ENCODE measurements at regions of chr1 and their contacts with region 1.

Region 1: GRCh38 chr1:84506002-84506728 is at the starts of genes GNG5 and SPATA1:
- DNase-seq: peak; percentile 98
- H3K4me3 Mint-ChIP-seq: peak within 1 kb of the TSS; percentile 95
- H3K27ac Mint-ChIP-seq: peak within 1 kb of the TSS; percentile 97
- H3K4me1 Mint-ChIP-seq: peaks cover 43% of the 10 kb centered on the region
- H3K27me3 Mint-ChIP-seq: no peaks in the 10 kb centered on the region
- total RNA-seq, gene GNG5: 122 to 127 TPM
- total RNA-seq, gene SPATA1: 4.0 to 4.7 TPM

Region 2: GRCh38 chr1:84422909-84423308 is 83.3 kb before region 1 on chr1:
- CTCF ChIA-PET with region 1: no interaction called
- POLR2A ChIA-PET with region 1: no interaction called
- DNase-seq: no peak
- H3K4me3 Mint-ChIP-seq: no peak overlapping the region
- H3K27ac Mint-ChIP-seq: no peak overlapping the region
- H3K4me1 Mint-ChIP-seq: peaks cover 2% of the 10 kb centered on the region
- H3K27me3 Mint-ChIP-seq: no peaks in the 10 kb centered on the region

Region 3: DNA sequence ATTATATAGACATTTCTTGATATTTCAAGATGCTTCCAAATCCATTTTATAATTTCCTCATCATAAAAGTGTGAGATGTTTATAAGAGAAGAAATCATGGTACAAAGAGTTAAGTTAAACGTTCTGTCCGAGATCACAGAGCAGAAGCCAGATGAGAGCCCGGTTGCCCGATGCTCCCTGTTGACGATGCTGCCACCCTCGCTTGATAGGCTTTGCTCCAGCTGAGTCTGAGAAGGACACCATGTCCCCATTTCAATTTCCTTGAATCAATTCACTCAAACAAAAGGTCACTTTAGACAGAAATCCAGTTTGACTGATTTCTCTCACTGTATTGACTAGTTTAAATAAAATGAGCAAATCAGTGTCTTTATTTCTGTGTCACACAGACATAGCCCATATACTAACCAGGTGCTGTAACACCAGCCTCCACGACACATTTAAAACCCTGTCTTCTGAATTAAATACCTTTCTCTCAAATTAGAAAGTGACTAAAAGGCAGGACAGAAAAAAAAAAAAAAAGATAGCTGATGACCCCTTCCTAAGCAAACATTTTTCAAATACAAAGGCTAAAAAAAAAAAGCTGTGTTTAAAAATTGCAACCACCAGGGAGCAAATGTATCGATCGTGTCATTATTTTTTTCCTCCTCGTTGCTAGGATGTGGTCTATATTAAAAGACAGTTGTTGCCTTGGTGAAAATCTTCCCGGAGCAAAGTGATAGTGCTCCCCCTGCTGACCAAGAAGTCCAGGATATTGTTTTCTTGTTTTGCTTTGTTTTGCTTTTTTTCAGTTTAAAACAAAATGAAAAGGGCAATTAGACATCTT is 72.7 kb before region 1 on chr1:
- CTCF ChIA-PET with region 1: interaction called, 4 read pairs
- POLR2A ChIA-PET with region 1: interaction called, 18 read pairs
- DNase-seq: peak; percentile 60
- H3K4me3 Mint-ChIP-seq: peak overlapping the region; percentile 47
- H3K27ac Mint-ChIP-seq: peak overlapping the region; percentile 1
- H3K4me1 Mint-ChIP-seq: peaks cover 10% of the 10 kb centered on the region
- H3K27me3 Mint-ChIP-seq: no peaks in the 10 kb centered on the region

Region 4: GRCh38 chr1:84478876-84479868 is 27.0 kb before region 1 on chr1 and contains the start of gene RPF1:
- CTCF ChIA-PET with region 1: interaction called, 6 read pairs
- POLR2A ChIA-PET with region 1: interaction called, 96 read pairs
- DNase-seq: peak; percentile 81
- H3K4me3 Mint-ChIP-seq: peak within 1 kb of the TSS; percentile 96
- H3K27ac Mint-ChIP-seq: peak within 1 kb of the TSS; percentile 95
- H3K4me1 Mint-ChIP-seq: peaks cover 34% of the 10 kb centered on the region
- H3K27me3 Mint-ChIP-seq: peaks cover 22% of the 10 kb centered on the region
- total RNA-seq, gene RPF1: 37.8 to 39.7 TPM

Region 5: GRCh38 chr1:84524590-84524989 is 18.4 kb after region 1 on chr1:
- CTCF ChIA-PET with region 1: interaction called, 5 read pairs
- POLR2A ChIA-PET with region 1: interaction called, 11 read pairs
- DNase-seq: no peak
- H3K4me3 Mint-ChIP-seq: no peak overlapping the region
- H3K27ac Mint-ChIP-seq: no peak overlapping the region
- H3K4me1 Mint-ChIP-seq: no peaks in the 10 kb centered on the region
- H3K27me3 Mint-ChIP-seq: no peaks in the 10 kb centered on the region

Region 6: DNA sequence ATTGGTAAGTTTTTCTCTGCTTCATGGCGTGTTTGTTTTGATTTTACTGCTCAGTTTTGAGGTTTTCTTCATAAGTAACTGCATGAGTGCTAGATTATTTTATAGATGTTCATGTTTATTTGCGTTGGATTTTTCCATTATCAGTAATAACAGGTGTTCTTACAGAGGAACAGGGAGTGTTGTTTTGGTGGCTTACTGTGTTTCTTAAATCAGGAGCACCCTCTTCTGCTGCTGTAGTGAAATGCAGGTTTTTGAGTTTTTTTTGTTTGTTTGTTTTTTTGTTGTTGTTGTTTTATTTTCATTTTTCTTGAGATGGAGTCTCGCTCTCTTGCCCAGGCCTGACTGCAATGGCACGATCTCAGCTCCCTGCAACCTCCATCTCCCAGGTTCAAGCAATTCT is 35.5 kb after region 1 on chr1:
- CTCF ChIA-PET with region 1: no interaction called
- POLR2A ChIA-PET with region 1: no interaction called
- DNase-seq: no peak
- H3K4me3 Mint-ChIP-seq: no peak overlapping the region
- H3K27ac Mint-ChIP-seq: no peak overlapping the region
- H3K4me1 Mint-ChIP-seq: peaks cover 24% of the 10 kb centered on the region
- H3K27me3 Mint-ChIP-seq: no peaks in the 10 kb centered on the region

Region 7: DNA sequence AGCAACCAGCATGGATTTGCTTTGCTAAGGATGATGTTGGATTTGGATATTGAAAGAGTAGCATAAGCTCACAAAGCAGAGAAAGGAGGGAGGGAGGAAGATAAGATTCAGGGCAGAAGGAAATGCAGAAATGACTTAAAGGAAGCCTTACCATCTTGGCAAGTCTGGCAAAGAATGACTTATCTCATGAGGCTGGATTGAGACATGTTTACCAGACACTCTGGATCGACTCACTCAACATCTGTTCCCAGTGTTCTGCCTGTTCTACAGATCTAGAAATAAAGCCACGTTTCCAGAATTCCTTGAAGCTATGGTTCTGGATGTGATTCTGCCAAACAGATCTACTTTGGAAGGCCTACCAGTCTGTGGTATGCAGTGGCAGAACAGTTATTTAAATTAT is 106.9 kb after region 1 on chr1:
- CTCF ChIA-PET with region 1: no interaction called
- POLR2A ChIA-PET with region 1: no interaction called
- DNase-seq: no peak
- H3K4me3 Mint-ChIP-seq: no peak overlapping the region
- H3K27ac Mint-ChIP-seq: no peak overlapping the region
- H3K4me1 Mint-ChIP-seq: no peaks in the 10 kb centered on the region
- H3K27me3 Mint-ChIP-seq: no peaks in the 10 kb centered on the region

Region 8: GRCh38 chr1:84690397-84691121 is 184.4 kb after region 1 on chr1 and contains the start of gene SSX2IP:
- CTCF ChIA-PET with region 1: interaction called, 3 read pairs
- POLR2A ChIA-PET with region 1: interaction called, 24 read pairs
- DNase-seq: peak; percentile 99
- H3K4me3 Mint-ChIP-seq: peak within 1 kb of the TSS; percentile 87
- H3K27ac Mint-ChIP-seq: peak within 1 kb of the TSS; percentile 82
- H3K4me1 Mint-ChIP-seq: peaks cover 58% of the 10 kb centered on the region
- H3K27me3 Mint-ChIP-seq: no peaks in the 10 kb centered on the region
- total RNA-seq, gene SSX2IP: 16.8 to 18.8 TPM

Measured in activated CD4-positive, alpha-beta memory T cell treated with anti-CD3 and anti-CD28 coated beads, Interleukin-2, amount 10 ng/mL, durations not matched to agents 7 days and 5 days (primary cell).